ENCODE measurements at regions of chr12 and their contacts with region 1.

Region 1: GRCh38 chr12:79776111-79776510 is 85.3 kb upstream of the PAWR start:
- H3K4me3 Mint-ChIP-seq: no peak overlapping the region
- H3K27ac Mint-ChIP-seq: no peak overlapping the region
- H3K4me1 Mint-ChIP-seq: no peaks in the 10 kb centered on the region
- H3K27me3 Mint-ChIP-seq: no peaks in the 10 kb centered on the region

Region 2: DNA sequence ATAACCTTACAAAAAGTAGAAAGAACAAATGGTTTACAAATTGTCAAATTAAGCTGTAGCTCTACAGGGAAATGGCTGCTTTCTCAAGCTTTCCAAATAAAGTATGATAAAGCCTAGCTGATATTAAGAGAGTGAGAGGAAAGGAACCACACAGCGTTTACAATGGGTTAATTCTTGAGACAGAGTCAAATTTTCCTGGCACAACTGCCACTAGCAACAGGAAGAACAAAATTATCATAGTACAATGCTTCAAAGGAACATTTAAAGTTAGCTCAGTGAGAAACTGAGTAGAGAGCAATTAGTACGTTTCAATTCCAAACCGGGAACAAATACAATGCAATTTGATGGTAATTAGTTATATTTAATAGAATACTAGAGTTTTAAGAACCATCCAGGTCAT is 42.7 kb after region 1 on chr12:
- intact Hi-C with region 1: loop called (anchors 5 kb)
- H3K4me3 Mint-ChIP-seq: no peak overlapping the region
- H3K27ac Mint-ChIP-seq: no peak overlapping the region
- H3K4me1 Mint-ChIP-seq: no peaks in the 10 kb centered on the region
- H3K27me3 Mint-ChIP-seq: no peaks in the 10 kb centered on the region